ENCODE measurements at regions of chr11 and their contacts with region 1.

Region 1: GRCh38 chr11:86745571-86745970 is 54.8 kb upstream of the PRSS23 start:
- DNase-seq: no peak
- H3K4me3 ChIP-seq: no peak overlapping the region
- H3K27me3 ChIP-seq: no peaks in the 10 kb centered on the region
- CTCF ChIP-seq: no peak

Region 2: GRCh38 chr11:86696004-86696403 is 49.6 kb before region 1 on chr11:
- CTCF ChIA-PET with region 1: interaction called, 4 read pairs
- POLR2A ChIA-PET with region 1: interaction called, 15 read pairs
- DNase-seq: peak; percentile 87
- H3K4me3 ChIP-seq: no peak overlapping the region
- H3K27me3 ChIP-seq: no peaks in the 10 kb centered on the region
- CTCF ChIP-seq: no peak

Region 3: GRCh38 chr11:86728548-86728947 is 17.0 kb before region 1 on chr11:
- CTCF ChIA-PET with region 1: no interaction called
- POLR2A ChIA-PET with region 1: no interaction called
- DNase-seq: no peak
- H3K4me3 ChIP-seq: no peak overlapping the region
- H3K27me3 ChIP-seq: no peaks in the 10 kb centered on the region
- CTCF ChIP-seq: no peak

Measured in BJ (cell line).